HEK293 (cell line): ENCODE measurements at regions of chr12 and their contacts with region 1.

Region 1: DNA sequence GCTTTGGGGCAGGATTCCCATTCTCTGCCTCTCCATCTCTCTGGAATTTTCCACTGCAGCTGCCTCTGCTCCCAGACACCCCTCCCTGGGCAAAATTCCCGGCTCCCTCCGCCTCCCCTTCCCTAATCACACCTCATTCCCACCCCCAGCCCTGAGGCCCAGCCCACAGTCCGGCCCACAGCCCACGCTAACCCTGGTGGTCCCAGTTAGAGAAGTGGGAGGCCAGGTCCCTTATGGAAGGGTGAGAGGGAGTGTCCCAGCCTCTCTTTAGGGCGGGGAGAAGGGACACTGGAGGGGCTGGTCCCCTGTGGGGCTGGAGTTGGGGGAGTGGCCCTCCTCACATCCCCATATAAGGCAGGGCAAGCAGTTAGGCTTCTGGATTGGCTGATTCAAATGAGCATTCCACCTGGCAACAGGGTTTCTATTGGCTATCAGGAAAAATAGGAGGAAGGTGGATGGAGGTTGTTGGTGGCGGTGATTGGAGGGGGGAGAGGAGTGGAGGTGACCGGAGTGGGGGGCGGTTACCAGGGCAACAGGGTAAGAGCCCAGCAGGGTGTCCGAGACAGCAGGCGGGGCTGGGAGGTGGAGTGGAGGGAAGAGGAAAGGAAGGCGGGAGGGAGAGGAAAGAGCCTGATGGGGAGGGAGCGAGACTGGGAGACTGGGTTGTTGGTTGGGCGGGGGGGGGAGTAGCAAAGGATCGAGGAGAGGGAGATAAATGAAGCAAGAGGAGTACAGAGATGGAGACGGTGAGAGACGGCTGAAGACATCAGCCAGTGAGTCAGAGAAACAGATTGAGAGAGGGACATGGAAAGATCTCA is 1.9 kb upstream of the PTMS start:
- H3K4me3 ChIP-seq: no peak overlapping the region; the same call in 1 of the 2 replicates
- H3K27ac ChIP-seq: peak overlapping the region; percentile 92
- H3K4me1 ChIP-seq: peaks cover 30% of the 10 kb centered on the region
- CTCF ChIP-seq: no peak

Region 2: GRCh38 chr12:4975574-4975973 is 1788.6 kb before region 1 on chr12:
- CTCF ChIA-PET with region 1: no interaction called
- POLR2A ChIA-PET with region 1: no interaction called
- H3K4me3 ChIP-seq: no peak overlapping the region
- H3K27ac ChIP-seq: no peak overlapping the region
- H3K4me1 ChIP-seq: no peaks in the 10 kb centered on the region
- CTCF ChIP-seq: no peak

Region 3: DNA sequence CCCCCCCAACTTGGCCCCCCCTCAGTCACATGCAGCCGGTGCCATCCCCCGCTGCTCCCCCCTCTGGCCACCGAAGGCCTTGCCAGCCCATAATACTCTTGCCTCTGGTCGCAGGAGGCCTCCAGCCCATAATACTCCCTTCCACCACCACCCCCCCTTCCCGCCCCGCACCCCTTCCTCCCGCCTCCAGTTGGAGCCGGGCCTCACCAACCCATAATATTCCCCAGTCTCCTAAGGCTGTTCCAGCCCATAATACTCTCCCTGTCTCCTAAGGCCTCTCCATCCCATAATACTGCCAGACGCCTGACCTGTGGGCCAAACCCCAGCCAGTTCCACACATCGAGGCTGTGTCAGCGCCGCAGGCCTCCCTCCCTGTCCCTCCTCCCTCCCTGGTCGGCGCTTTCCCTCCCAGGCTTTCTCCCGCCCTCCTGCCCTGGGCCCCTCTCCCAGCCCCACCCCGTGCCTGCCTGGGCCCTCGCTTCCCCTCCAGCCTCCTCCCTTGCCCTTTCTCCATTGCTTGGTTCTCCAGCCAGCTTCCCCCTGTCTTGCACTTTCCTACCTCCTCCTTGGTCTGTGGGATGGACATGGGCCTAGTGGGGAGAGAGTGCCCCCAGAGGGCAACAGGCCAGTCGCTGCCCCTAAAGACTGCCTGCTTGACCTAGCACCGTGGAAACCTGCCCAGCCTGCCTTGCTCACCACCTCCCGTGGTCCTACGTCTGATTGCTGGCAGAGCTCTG is 150.3 kb before region 1 on chr12:
- CTCF ChIA-PET with region 1: no interaction called
- POLR2A ChIA-PET with region 1: interaction called, 17 read pairs
- H3K4me3 ChIP-seq: no peak overlapping the region
- H3K27ac ChIP-seq: peak overlapping the region; percentile 79
- H3K4me1 ChIP-seq: peaks cover 14% of the 10 kb centered on the region
- CTCF ChIP-seq: peak; percentile 87

Region 4: GRCh38 chr12:6632026-6632983 is 131.9 kb before region 1 on chr12:
- CTCF ChIA-PET with region 1: no interaction called
- POLR2A ChIA-PET with region 1: no interaction called
- H3K4me3 ChIP-seq: no peak overlapping the region
- H3K27ac ChIP-seq: no peak overlapping the region
- H3K4me1 ChIP-seq: peaks cover 3% of the 10 kb centered on the region; the same call in 1 of the 2 replicates
- CTCF ChIP-seq: no peak

Region 5: GRCh38 chr12:6778574-6779550 is 14.6 kb after region 1 on chr12:
- CTCF ChIA-PET with region 1: interaction called, 71 read pairs
- POLR2A ChIA-PET with region 1: interaction called, 24 read pairs
- H3K4me3 ChIP-seq: peak overlapping the region; percentile 23
- H3K27ac ChIP-seq: peak overlapping the region; percentile 24; the same call in 1 of the 2 replicates
- H3K4me1 ChIP-seq: peaks cover 7% of the 10 kb centered on the region
- CTCF ChIP-seq: peak; percentile 99

Region 6: DNA sequence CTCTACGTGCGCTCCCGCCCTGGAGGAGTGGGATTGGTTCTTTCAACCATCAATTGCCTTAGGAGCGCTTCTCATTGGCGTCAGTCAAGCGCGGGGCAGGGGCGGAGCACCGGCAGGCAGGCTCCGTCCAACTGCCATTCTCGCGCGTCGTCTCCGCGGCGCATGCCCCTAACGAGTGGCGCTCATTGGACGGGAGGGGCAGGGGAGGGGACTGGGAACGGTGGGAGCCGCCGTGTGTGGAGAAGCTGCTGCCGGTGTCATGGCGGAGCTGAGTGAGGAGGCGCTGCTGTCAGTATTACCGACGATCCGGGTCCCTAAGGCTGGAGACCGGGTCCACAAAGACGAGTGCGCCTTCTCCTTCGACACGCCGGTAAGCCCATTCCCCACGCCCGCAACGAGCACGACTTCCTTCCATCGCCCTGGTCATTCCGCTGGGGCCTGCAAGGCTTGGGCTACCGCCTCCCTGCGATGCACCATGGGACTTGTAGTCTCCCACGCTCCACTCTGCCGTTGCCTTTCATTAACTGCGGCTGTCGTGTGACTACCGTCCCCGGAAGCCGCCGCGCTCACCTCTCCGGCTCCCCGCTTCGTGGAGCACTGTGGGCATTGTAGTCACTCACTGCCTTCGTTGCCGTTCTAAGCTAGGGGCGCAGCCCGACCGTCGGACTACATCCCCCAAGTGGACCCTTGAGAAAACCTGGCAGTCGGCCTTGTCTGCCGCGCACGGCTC is 87.9 kb after region 1 on chr12 and contains the start of gene USP5:
- CTCF ChIA-PET with region 1: interaction called, 4 read pairs
- POLR2A ChIA-PET with region 1: interaction called, 36 read pairs
- H3K4me3 ChIP-seq: peak within 1 kb of the TSS; percentile 76
- H3K27ac ChIP-seq: peak within 1 kb of the TSS; percentile 58
- H3K4me1 ChIP-seq: peaks cover 11% of the 10 kb centered on the region
- CTCF ChIP-seq: peak; percentile 70

Region 7: GRCh38 chr12:6884539-6884938 is 120.3 kb after region 1 on chr12:
- CTCF ChIA-PET with region 1: no interaction called
- POLR2A ChIA-PET with region 1: no interaction called
- H3K4me3 ChIP-seq: no peak overlapping the region
- H3K27ac ChIP-seq: no peak overlapping the region
- H3K4me1 ChIP-seq: no peaks in the 10 kb centered on the region
- CTCF ChIP-seq: no peak